Vagina (tissue), 2 donors: ENCODE measurements at regions of chr17 and their contacts with region 1.

Region 1: DNA sequence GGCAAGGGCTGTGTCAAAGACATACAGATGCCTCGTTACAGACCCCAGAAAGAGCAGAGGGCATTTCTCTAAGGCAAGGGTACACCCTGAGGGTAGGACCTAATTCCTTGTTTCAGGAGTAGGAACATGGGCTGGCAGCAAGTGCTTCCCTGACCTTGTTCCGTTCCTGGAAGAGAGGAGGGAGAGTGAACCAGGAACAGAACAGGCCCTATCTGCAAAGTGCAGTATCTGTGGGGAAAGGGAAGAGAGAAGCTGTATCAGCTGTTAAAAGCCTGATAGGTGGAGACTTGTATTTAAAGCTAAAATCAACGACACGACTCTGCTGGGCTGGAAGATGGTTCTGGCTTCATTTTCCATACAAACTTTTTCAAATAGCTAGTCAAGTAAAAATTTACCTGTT is 26.1 kb upstream of the FASN start:
- DNase-seq: no peak
- H3K4me3 ChIP-seq: no peak overlapping the region
- H3K27ac ChIP-seq: no peak overlapping the region
- H3K4me1 ChIP-seq: no peaks in the 10 kb centered on the region
- H3K27me3 ChIP-seq: no peaks in the 10 kb centered on the region
- CTCF ChIP-seq: no peak
- POLR2A ChIP-seq: no peak

Region 2: GRCh38 chr17:82145550-82146190 is 21.6 kb after region 1 on chr17:
- intact Hi-C with region 1: loop called (anchors 1 kb)
- DNase-seq: no peak
- H3K4me3 ChIP-seq: no peak overlapping the region
- H3K27ac ChIP-seq: no peak overlapping the region
- H3K4me1 ChIP-seq: no peaks in the 10 kb centered on the region
- H3K27me3 ChIP-seq: no peaks in the 10 kb centered on the region
- CTCF ChIP-seq: no peak
- POLR2A ChIP-seq: no peak